ENCODE measurements at regions of chr3 and their contacts with region 1.

Region 1: DNA sequence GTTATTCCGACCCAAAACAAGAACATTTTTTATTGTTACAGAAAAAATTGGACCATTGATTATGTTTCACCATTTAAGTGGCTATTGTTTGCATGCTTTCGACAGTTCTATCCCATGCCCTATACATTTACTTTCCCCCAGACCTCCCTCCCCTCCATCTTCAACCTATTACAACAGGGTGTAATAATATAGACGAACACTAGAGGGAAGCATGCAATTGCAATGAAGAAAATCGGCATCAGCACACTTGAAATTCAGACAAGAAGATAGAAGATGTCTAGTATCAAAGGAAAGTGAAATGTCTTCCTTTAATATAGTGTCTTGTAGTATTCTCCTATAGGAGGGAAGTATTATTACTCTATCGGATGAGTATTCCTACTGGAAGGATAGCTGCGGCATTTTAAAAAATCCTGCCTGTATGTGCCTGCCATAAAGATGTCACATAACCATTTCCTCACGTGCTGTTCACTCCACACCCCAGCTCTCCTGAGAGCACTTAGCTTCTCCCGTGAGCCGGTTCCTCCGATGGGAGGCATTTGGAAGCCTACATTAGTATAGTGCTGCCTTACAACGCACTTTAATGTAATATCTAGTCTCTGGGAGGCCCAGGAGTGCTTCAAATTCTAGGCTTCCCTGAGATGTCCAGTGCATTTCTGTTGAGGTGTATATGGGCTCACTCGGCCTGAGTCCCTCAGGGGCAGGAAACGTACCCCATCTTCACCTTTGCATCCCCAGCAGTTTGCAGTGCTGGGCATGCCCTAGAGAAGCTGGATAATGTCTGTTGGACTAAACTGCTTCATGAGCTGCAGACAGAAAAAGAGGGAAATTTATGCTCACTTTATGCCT is 17.8 kb upstream of the ERICH6 start:
- DNase-seq: peak; percentile 73
- H3K4me3 ChIP-seq: no peak overlapping the region
- H3K27ac ChIP-seq: no peak overlapping the region
- H3K4me1 ChIP-seq: peaks cover 0 to 3% of the 10 kb centered on the region in 2 experiments; a peak in 1 of 4 replicates
- H3K27me3 ChIP-seq: no peaks in the 10 kb centered on the region
- CTCF ChIP-seq: peak; percentile 83
- EP300 ChIP-seq: no peak
- RAD21 ChIP-seq: peak; percentile 91

Region 2: DNA sequence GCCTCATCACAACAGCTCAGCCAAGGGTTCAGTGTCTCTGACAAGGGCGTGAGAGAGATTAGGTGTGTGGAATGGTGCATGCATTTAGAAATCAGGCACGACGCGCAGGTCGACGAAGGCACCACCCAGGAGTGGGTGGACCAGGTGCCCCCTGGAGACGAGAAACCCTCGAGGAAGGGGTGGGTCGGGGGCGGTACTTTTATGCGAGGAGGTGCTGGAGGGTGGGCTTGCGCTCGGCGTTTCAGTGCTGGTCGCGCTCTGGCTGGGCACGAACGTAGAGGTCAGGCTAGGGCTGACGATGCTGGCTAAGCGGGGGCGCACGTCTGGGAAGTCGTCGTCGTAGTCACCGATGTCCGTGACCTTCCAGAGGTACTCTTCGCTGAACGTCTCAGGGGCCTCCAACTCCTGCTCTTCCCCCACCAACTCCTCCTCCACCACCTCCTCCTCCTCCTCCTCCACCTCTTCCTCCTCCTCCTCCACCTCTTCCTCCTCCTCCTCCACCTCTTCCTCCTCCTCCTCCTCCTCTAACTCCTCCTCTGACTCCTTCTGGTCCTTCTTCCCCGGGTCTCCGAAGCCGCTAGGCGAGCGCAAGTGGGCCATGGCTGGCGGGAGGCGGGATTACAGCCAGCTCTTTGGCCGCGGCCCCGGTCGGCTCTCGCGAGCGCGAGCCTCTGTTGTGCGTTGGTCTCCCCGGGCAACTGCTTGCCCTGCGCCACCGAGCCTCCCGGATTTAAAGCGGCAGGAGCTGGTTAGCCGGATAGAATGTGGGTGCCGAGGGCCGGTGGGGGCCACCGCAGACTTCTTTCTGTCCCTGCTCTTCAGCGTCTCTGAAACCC is 18.0 kb before region 1 on chr3 and contains the start of gene ERICH6:
- CTCF ChIA-PET with region 1: interaction called, 14 read pairs
- POLR2A ChIA-PET with region 1: no interaction called
- DNase-seq: peak; percentile 92
- H3K4me3 ChIP-seq: peak within 1 kb of the TSS; percentile 60 to 90
- H3K27ac ChIP-seq: peak within 1 kb of the TSS; percentile 72 to 77; a peak in 3 of 4 replicates
- H3K4me1 ChIP-seq: peaks cover 0 to 2% of the 10 kb centered on the region in 2 experiments; a peak in 2 of 4 replicates
- H3K27me3 ChIP-seq: no peaks in the 10 kb centered on the region
- CTCF ChIP-seq: no peak
- EP300 ChIP-seq: no peak
- RAD21 ChIP-seq: no peak
- polyA plus RNA-seq, gene ERICH6: 0.08 and 0.21 TPM in 2 replicates

Region 3: DNA sequence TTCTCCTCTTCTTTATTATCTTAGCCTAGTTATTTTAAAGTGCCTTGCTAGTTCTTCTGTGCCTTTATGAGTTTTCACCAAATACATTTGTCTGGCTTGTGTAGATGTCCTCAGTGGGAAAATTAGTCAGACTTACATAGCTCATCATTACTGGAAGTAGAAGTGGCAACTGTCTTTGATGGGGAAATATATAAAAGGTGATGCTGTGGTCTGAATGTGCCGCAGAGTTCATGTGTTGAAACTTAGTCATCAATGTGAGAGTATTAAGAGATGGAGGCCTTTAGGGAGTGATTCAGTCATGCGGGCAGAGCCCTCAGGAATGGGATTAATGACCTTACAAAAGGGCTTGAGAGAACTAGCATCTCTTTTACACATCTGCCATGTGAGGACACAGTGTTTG is 11.4 kb before region 1 on chr3:
- CTCF ChIA-PET with region 1: interaction called, 14 read pairs
- POLR2A ChIA-PET with region 1: no interaction called
- DNase-seq: no peak
- H3K4me3 ChIP-seq: no peak overlapping the region
- H3K27ac ChIP-seq: no peak overlapping the region
- H3K4me1 ChIP-seq: no peaks in the 10 kb centered on the region
- H3K27me3 ChIP-seq: no peaks in the 10 kb centered on the region
- CTCF ChIP-seq: no peak
- EP300 ChIP-seq: no peak
- RAD21 ChIP-seq: no peak

Region 4: DNA sequence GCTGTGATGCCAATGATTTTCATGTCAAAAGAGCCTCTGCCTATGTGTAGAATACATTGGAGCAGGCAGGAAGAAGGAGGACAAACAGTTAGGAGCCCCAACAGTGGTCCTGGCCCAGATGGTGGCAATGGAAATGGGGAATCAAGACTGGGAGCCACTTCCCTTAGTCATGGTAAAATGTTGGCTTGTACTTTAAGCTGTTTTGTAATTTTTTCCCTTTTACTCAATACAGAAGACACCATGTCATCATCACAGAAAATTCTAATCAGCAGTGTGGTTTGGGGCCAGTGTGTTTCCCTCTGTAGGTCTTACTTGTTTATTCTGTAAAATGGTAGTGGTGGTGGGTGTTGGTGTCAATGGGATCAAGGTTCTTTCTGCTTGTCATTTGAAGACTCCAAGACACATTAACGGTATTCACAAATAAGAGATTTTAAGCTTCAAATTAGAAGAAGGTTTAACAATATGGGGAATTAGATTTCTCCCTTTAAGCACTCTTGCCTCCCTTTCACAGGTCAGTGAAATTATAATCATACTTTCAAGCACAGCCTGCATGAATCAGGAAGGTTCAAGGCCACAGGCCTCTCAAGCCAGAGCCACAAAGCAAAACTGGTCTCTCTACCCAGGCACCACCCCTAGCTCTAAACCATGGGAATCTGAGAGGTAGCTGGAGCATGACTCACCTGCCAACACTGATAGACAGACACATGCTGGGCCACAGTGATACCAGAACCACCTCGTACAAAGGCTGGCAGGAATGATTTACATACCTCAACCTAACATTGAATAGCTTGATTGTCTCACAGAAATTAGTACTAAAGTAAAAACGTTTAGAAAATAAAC is 16.6 kb after region 1 on chr3:
- CTCF ChIA-PET with region 1: interaction called, 12 read pairs
- POLR2A ChIA-PET with region 1: no interaction called
- DNase-seq: no peak
- H3K4me3 ChIP-seq: no peak overlapping the region
- H3K27ac ChIP-seq: no peak overlapping the region
- H3K4me1 ChIP-seq: peaks cover 3 to 22% of the 10 kb centered on the region in 2 experiments; a peak in 3 of 4 replicates
- H3K27me3 ChIP-seq: no peaks in the 10 kb centered on the region
- CTCF ChIP-seq: no peak
- EP300 ChIP-seq: no peak
- RAD21 ChIP-seq: no peak

Region 5: DNA sequence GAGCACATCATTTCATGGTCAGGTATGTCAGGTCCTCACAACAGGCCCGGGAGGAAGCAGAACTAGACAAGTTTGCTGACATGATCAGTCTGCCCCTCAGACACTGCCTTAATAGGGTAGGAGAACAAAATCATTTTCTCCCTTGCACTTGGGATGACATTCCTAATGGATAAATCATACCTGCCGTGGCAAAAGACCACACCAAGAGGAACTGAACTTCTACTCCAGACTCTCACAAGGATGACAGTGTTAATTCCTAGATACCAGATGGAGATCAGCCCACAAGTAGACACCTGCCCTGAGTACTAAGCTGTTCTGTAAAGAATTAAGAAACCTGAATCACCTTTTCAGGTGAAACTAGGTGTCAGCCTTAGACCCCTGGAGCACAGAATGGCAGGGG is 22.0 kb after region 1 on chr3:
- CTCF ChIA-PET with region 1: interaction called, 12 read pairs
- POLR2A ChIA-PET with region 1: no interaction called
- DNase-seq: no peak
- H3K4me3 ChIP-seq: no peak overlapping the region
- H3K27ac ChIP-seq: no peak overlapping the region
- H3K4me1 ChIP-seq: peaks cover 2 to 40% of the 10 kb centered on the region in 2 experiments; a peak in 2 of 4 replicates
- H3K27me3 ChIP-seq: no peaks in the 10 kb centered on the region
- CTCF ChIP-seq: no peak
- EP300 ChIP-seq: no peak
- RAD21 ChIP-seq: no peak

Region 6: GRCh38 chr3:150870396-150870795 is 148.9 kb after region 1 on chr3:
- CTCF ChIA-PET with region 1: interaction called, 17 read pairs
- POLR2A ChIA-PET with region 1: no interaction called
- DNase-seq: no peak
- H3K4me3 ChIP-seq: no peak overlapping the region
- H3K27ac ChIP-seq: no peak overlapping the region
- H3K4me1 ChIP-seq: no peaks in the 10 kb centered on the region
- H3K27me3 ChIP-seq: peaks cover 5% of the 10 kb centered on the region; the same call in 1 of the 2 replicates
- CTCF ChIP-seq: no peak
- EP300 ChIP-seq: no peak
- RAD21 ChIP-seq: no peak